SK-N-SH (cell line): ENCODE measurements at regions of chr7 and their contacts with region 1.

Region 1: DNA sequence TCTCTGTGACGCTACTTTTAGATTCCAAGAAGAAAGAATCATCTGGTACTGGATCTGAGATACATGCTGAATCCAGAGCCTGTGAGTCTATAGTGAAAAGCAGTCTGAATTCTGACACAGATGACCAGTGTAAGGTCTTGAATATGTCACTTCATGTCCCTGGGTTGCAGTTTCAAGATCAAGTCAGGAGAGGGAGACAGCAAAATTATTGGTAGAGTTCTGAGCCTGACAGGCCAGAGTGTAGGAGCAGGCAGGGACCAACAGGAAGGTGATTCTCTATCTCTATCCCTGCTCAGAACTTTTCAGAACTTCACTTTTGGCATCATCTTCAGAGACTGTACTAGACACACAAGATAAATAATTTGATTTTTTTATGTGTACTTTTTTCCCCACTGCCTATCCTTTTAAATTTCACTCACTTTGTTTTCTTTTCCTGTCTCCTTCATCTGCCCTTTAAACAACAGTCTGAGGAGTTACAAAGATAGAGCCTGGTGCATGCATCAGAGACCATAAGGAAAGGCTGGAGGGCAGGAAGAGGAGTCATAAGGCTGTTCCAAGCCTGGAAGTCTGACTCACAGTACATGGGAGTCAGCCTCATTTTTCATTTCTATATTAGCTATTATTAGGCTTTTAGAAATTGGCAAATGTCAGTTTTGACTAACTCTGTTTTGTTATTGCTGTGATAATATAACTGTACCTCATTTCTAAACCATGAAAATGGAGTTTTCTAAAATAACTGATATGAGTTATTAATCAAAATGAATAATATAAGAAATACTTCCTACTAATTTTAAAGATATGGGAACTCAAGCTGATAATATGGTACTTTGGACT is 120.2 kb upstream of the TMEM229A start:
- DNase-seq: peak; percentile 34
- H3K4me3 ChIP-seq: no peak overlapping the region
- H3K27ac ChIP-seq: peak overlapping the region in 1 of 2 experiments; percentile 39; a peak in 2 of 4 replicates
- H3K4me1 ChIP-seq: peaks cover 0 to 6% of the 10 kb centered on the region in 2 experiments; a peak in 2 of 4 replicates
- H3K27me3 ChIP-seq: no peaks in the 10 kb centered on the region
- CTCF ChIP-seq: peak; percentile 60
- EP300 ChIP-seq: no peak
- RAD21 ChIP-seq: peak; percentile 66

Region 2: GRCh38 chr7:123966936-123967335 is 186.1 kb before region 1 on chr7:
- CTCF ChIA-PET with region 1: interaction called, 19 read pairs
- POLR2A ChIA-PET with region 1: no interaction called
- DNase-seq: no peak
- H3K4me3 ChIP-seq: no peak overlapping the region; a peak in 1 of 4 replicates
- H3K27ac ChIP-seq: no peak overlapping the region
- H3K4me1 ChIP-seq: no peaks in the 10 kb centered on the region
- H3K27me3 ChIP-seq: no peaks in the 10 kb centered on the region
- CTCF ChIP-seq: peak; percentile 48
- EP300 ChIP-seq: no peak
- RAD21 ChIP-seq: peak; percentile 89

Region 3: DNA sequence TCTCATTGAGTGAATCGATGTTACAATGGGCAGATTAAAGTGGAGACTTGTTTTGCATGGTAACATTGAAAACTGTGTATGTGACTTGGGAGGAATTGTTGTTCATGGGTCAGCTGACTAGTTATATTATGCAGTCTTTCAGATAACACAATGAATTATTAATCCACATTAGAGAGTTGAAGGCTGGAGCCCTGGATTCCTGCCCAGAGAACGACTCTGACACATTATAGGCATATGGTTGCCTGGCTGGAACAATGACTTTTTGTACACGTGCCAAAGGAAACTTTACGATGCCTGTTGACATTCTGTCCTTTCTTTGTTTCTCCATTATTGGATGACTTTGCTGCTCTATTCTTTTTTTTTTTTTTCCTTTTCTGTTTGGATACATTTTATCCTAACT is 67.9 kb before region 1 on chr7:
- CTCF ChIA-PET with region 1: interaction called, 10 read pairs
- POLR2A ChIA-PET with region 1: no interaction called
- DNase-seq: peak; percentile 41
- H3K4me3 ChIP-seq: peak overlapping the region in 1 of 2 experiments; percentile 0; a peak in 1 of 4 replicates
- H3K27ac ChIP-seq: peak overlapping the region; percentile 47 to 98; a peak in 3 of 4 replicates
- H3K4me1 ChIP-seq: peaks cover 24 to 46% of the 10 kb centered on the region in 2 experiments
- H3K27me3 ChIP-seq: no peaks in the 10 kb centered on the region
- CTCF ChIP-seq: no peak
- EP300 ChIP-seq: peak; percentile 46 to 99; a peak in 3 of 4 replicates
- RAD21 ChIP-seq: peak; percentile 29

Region 4: DNA sequence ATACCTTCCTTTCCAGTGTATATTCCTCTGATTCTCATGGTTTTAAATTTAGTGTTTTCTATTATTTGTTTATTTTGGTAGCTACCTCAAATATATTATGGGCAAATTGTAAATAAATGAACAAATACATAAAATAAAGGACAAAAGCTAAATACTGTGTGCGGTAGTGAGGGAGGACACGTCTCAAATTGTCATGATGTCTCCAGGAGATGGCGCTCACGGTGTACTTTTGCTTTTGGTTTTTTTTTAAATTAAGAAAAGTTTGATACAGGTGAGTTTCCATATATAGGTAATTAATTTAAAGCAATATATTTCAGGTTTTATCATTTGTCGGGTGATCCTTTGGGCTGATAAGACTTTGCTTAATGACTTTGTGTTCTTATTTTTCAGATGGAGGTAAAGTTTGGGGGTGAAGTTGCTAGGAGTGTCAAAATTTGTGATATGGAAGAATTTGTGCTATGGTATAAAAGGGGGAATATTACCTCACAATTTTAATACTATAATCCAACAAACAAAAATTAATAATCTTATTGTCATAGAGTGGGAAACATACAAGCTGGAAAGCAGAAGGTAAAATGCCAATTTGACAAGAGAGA is 51.8 kb before region 1 on chr7:
- CTCF ChIA-PET with region 1: interaction called, 10 read pairs
- POLR2A ChIA-PET with region 1: no interaction called
- DNase-seq: peak; percentile 33
- H3K4me3 ChIP-seq: no peak overlapping the region
- H3K27ac ChIP-seq: no peak overlapping the region; a peak in 1 of 4 replicates
- H3K4me1 ChIP-seq: no peaks in the 10 kb centered on the region; a peak in 1 of 4 replicates
- H3K27me3 ChIP-seq: no peaks in the 10 kb centered on the region
- CTCF ChIP-seq: peak; percentile 69
- EP300 ChIP-seq: no peak
- RAD21 ChIP-seq: peak; percentile 64

Region 5: GRCh38 chr7:124276019-124276622 is 123.0 kb after region 1 on chr7:
- CTCF ChIA-PET with region 1: interaction called, 12 read pairs
- POLR2A ChIA-PET with region 1: no interaction called
- DNase-seq: peak; percentile 27
- H3K4me3 ChIP-seq: no peak overlapping the region; a peak in 1 of 4 replicates
- H3K27ac ChIP-seq: no peak overlapping the region
- H3K4me1 ChIP-seq: no peaks in the 10 kb centered on the region
- H3K27me3 ChIP-seq: no peaks in the 10 kb centered on the region
- CTCF ChIP-seq: peak; percentile 83
- EP300 ChIP-seq: no peak
- RAD21 ChIP-seq: peak; percentile 59

Region 6: GRCh38 chr7:124765401-124766352 is 612.6 kb after region 1 on chr7 and contains the start of gene GPR37:
- CTCF ChIA-PET with region 1: interaction called, 28 read pairs
- POLR2A ChIA-PET with region 1: no interaction called
- DNase-seq: peak; percentile 95
- H3K4me3 ChIP-seq: peak within 1 kb of the TSS; percentile 69 to 75
- H3K27ac ChIP-seq: no peak within 1 kb of the TSS; a peak in 1 of 4 replicates
- H3K4me1 ChIP-seq: peaks cover 0 to 14% of the 10 kb centered on the region in 2 experiments; a peak in 1 of 4 replicates
- H3K27me3 ChIP-seq: peaks cover 24% of the 10 kb centered on the region
- CTCF ChIP-seq: no peak
- EP300 ChIP-seq: no peak
- RAD21 ChIP-seq: peak; percentile 51
- polyA plus RNA-seq, gene GPR37: 0.03 TPM in 1 of 2 replicates, not detected in the other

Region 7: DNA sequence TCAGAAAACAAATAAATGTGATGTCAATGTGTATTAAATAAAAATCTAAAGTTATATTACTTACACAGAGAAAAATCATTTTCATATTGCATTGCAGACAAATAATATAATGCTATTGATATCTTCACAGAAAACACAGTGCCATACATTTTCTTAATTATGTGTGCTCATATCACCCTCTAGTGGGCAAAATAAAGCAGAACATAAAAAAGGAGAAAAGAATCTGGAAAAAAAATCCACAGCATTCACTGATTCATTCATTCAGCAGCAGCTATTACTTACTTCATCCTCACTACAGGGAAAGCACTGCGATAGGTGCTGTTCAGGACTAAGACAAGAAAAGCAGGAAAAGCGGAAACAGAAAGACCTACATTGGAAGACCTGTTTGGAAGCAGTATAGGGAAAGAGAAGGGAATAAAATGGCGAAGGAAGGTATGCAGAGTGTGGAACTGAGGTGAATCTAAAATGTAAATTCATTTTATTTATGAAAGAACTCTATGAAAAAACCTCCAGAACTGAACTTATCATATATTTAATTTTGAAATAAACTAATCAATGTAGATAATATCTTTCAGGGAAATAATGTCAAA is 703.3 kb after region 1 on chr7:
- CTCF ChIA-PET with region 1: interaction called, 28 read pairs
- POLR2A ChIA-PET with region 1: no interaction called
- DNase-seq: peak; percentile 37
- H3K4me3 ChIP-seq: no peak overlapping the region; a peak in 1 of 4 replicates
- H3K27ac ChIP-seq: peak overlapping the region in 1 of 2 experiments; percentile 51; a peak in 2 of 4 replicates
- H3K4me1 ChIP-seq: peaks cover 0 to 7% of the 10 kb centered on the region in 2 experiments; a peak in 1 of 4 replicates
- H3K27me3 ChIP-seq: no peaks in the 10 kb centered on the region
- CTCF ChIP-seq: peak; percentile 94
- EP300 ChIP-seq: no peak
- RAD21 ChIP-seq: peak; percentile 77